ENCODE measurements at regions of chr12 and their contacts with region 1.

Region 1: DNA sequence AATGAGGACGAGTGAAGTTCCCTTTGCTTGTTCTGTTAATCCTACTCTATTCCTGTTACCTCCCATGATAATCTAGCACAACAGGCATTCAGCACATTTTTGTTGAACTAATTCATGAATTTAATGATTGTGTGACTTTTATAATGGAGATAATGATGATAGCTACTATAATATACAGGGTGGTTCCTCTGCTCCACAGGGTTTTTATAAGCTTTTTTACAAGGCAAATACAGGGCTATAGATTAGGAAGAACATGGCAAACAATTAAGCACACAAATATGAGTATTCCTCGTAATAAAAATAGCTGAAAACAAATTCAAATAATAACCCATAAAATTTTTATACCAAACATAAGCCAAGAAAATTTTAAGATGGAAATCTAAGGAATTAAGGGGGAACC is 145.6 kb upstream of the TMTC1 start:
- DNase-seq: no peak
- H3K4me3 Mint-ChIP-seq: no peak overlapping the region
- H3K27ac Mint-ChIP-seq: no peak overlapping the region
- H3K4me1 Mint-ChIP-seq: peaks cover 6% of the 10 kb centered on the region
- H3K27me3 Mint-ChIP-seq: no peaks in the 10 kb centered on the region
- CTCF ChIP-seq: no peak

Region 2: GRCh38 chr12:29762637-29763300 is 166.5 kb before region 1 on chr12:
- CTCF ChIA-PET with region 1: no interaction called
- intact Hi-C with region 1: no loop called
- DNase-seq: no peak
- H3K4me3 Mint-ChIP-seq: no peak overlapping the region
- H3K27ac Mint-ChIP-seq: no peak overlapping the region
- H3K4me1 Mint-ChIP-seq: no peaks in the 10 kb centered on the region
- H3K27me3 Mint-ChIP-seq: no peaks in the 10 kb centered on the region
- CTCF ChIP-seq: no peak

Region 3: DNA sequence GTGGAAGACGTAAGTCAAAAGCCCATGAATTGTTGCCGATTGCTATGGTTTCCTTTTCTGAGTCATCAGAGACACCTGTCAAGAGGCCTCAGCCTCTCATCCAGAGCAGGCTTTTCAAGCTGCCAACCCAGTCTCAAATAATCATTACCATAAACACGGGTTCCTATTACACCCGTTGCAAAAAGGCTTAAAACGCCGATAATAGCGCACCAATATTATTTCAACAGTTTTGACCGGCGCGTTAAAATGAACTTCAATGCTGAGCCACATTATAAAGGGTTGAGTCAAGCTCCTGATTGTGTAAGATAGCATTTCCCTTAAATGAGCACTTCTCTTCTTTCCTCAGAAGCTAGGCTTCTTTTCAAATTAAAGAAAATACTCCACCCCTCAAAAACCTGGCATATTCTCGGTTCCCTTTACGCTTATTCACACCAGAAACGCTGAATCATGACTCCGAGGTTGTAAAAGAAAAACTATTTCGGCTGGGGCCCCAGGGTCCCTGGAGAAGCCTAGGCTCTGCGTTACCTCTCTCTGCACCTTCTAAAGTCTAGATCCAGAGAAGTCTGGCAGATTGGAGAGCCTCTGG is 146.9 kb before region 1 on chr12:
- CTCF ChIA-PET with region 1: no interaction called
- intact Hi-C with region 1: no loop called
- DNase-seq: no peak
- H3K4me3 Mint-ChIP-seq: no peak overlapping the region
- H3K27ac Mint-ChIP-seq: no peak overlapping the region
- H3K4me1 Mint-ChIP-seq: no peaks in the 10 kb centered on the region
- H3K27me3 Mint-ChIP-seq: peaks cover 21% of the 10 kb centered on the region
- CTCF ChIP-seq: no peak

Region 4: GRCh38 chr12:29889737-29890136 is 39.6 kb before region 1 on chr12:
- CTCF ChIA-PET with region 1: no interaction called
- intact Hi-C with region 1: loop called (anchors 1 kb)
- DNase-seq: peak; percentile 19
- H3K4me3 Mint-ChIP-seq: no peak overlapping the region
- H3K27ac Mint-ChIP-seq: no peak overlapping the region
- H3K4me1 Mint-ChIP-seq: peaks cover 21% of the 10 kb centered on the region
- H3K27me3 Mint-ChIP-seq: no peaks in the 10 kb centered on the region
- CTCF ChIP-seq: no peak

Region 5: DNA sequence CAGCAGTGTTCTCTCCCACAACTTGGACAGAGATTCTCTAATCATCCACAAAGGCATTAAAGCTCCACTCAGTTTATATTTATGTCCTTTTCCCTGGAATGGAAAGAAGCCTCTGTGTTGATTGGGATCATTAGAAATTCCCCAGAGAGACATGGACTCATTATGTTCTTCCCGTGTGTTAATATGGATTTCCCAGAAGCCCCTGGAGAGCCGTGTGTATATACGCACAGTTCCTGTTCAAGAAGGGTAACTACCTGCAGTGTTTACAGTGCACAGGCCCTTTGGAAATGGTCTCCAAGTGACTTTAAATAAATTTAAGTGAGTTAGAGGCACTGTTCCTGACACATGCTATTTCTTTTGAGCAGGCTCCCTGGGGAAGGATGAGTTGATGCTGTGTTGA is 282.4 kb after region 1 on chr12:
- CTCF ChIA-PET with region 1: no interaction called
- intact Hi-C with region 1: no loop called
- DNase-seq: no peak
- H3K4me3 Mint-ChIP-seq: no peak overlapping the region
- H3K27ac Mint-ChIP-seq: no peak overlapping the region
- H3K4me1 Mint-ChIP-seq: no peaks in the 10 kb centered on the region
- H3K27me3 Mint-ChIP-seq: peaks cover 9% of the 10 kb centered on the region
- CTCF ChIP-seq: no peak